GM10248 (cell line): ENCODE measurements at regions of chr9 and their contacts with region 1.

Region 1: DNA sequence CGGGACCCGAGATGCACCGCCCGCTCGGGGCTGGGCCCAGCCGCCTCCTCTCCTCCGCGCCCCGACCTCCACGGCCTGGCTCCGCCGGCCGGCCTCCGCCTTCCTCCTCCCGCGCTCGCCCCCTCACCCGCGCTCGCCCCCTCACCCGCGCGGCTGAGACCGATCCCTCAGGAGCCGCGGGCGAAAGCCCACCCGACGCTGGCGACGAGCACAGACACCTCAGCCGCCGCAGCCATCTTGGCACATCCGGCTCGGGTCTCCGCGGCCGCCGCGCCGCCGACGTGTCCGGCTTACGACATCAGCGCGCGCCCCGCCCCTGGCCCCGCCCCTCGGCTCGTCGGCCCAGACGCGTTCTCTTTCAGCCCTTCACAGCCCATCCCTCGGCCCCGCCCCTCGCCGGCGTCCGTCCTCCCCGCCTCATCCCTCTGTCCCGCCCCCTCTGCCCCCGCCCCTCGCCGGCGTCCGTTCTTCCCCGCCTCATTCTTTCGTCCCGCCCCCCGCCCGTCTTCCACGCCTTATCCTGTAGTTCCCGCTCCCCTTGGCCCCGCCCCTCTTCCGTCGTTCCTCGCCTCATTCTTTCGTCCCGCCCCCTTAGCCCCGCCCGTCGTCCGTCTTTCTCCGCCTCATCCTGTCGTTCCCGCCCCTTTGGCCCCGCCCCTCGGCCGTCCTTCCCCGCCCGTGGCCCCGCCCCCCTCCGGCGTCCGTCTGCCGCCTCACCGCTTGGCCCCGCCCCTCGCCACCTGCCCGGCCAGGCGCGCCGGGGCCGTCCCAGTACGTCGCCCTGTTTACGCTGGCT is at the start of gene SEC16A:
- DNase-seq: peak; percentile 99
- CTCF ChIP-seq: no peak

Region 2: DNA sequence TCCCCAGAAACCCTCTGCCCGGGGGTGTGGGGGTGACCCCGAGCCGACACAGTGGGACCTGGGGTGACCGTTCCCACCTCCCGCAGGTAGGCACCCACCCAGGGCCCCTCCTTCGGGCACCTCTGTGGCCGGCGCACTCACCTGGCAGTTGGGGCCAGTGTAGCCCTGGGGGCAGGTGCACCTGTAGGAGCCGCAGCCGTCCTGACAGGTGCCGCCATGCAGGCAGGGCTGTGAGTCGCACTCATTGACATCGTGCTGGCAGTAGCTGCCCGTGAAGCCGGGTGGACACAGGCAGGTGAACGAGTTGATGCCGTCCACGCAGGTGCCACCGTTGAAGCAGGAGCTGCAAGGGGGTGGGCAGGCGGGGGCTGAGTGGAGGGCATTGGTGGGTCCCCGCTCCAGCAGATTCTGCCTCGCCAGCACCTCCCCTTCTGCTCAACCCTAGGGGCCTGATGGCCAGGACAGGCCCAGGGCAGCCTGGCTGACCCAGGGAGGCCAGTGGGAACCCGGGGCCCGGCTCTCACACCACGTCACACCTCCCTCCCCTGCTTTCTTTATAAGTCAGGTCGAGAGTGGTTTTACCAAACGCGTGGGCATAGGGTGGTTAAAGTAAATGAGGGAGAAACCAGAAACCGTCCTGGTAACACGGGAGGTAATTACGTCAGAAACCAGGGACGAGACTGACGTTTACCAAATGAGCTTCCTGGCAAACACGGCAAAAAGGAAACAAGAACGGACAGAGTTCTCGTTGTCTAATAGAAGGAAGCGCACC is 25.9 kb after region 1 on chr9:
- CTCF ChIA-PET with region 1: interaction called, 13 read pairs
- POLR2A ChIA-PET with region 1: no interaction called
- DNase-seq: no peak
- CTCF ChIP-seq: no peak

Region 3: DNA sequence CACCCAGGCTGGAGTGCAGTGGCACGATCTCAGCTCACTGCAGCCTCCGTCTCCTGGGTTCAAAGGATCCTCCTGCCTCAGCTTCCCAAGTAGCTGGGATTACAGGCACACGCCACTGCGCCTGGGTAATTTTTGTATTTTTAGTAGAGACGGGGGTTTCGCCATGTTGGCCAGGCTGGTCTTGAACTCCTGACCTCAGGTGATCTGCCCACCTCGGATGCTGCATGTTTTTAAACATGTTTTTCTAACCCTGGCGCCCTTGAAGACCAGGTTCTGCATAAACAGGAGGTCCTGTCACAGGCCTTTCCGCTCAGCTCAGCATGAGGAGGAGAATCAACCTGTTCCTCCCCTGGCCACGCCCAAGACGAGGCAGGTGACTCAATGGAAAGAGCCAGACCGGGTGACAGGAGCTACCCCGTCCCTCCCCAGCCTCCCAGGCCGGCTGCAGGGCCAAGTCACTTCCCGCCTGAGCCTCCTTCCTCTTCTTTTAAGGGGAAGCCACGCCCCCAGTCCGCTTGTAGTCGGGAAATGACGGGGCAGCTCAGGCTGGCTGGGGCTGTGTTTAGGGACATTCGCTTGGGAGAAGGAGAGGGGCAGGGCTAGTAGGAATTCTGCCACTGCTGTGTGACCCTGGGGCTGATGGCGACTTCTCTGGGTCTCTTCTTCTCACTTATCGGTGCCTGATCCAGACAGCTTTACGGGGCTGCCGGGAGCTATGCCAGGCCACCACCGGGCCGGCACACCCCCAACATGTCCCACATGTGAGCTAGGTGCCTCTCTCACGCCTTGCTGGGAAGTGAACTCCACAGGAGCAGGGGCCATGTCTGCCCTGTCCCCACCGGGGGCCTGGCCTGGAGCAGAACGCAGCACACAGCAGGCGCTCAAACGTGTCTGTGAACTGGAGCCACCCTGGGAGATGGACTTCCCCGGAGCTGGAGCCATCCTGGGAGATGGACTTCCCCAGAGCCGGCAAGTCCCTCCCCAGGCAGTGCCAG is 56.7 kb after region 1 on chr9:
- CTCF ChIA-PET with region 1: interaction called, 23 read pairs
- POLR2A ChIA-PET with region 1: no interaction called
- DNase-seq: peak; percentile 88
- CTCF ChIP-seq: no peak

Region 4: DNA sequence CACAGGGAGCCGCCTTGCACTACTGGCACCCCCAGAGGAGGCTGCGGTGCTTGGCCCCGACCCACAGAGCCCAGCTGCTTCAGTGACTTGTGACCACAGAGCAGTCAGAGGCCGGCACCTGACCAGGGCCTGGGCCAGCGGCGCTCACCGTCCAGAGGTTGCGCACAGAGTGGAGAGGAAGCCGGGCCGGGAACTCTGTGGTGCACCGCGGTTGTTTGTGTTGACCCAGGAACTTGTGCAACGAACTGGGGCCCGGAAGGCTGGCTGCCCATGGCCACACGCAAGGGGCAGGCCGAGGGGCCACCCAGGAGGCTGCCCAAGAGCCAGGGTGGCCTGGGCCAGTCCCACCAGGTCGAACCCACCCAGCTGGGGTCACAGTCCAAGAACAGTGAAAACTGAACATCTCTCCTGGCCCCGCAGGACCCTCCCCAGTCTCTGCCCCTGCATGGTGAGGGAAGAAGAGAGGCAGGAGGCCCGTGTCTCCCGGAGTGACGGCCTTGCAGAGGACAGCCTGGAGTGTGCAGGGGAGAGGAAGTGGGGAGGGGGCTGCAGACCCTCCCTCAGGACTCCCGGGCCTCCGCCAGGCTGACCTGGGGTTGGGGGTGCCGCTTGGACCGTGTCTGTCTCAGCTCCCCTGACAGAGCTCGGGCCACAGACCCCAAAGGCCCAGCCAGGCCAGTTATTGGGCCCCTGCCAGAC is 136.9 kb after region 1 on chr9:
- CTCF ChIA-PET with region 1: interaction called, 247 read pairs
- POLR2A ChIA-PET with region 1: no interaction called
- DNase-seq: no peak
- CTCF ChIP-seq: no peak

Region 5: DNA sequence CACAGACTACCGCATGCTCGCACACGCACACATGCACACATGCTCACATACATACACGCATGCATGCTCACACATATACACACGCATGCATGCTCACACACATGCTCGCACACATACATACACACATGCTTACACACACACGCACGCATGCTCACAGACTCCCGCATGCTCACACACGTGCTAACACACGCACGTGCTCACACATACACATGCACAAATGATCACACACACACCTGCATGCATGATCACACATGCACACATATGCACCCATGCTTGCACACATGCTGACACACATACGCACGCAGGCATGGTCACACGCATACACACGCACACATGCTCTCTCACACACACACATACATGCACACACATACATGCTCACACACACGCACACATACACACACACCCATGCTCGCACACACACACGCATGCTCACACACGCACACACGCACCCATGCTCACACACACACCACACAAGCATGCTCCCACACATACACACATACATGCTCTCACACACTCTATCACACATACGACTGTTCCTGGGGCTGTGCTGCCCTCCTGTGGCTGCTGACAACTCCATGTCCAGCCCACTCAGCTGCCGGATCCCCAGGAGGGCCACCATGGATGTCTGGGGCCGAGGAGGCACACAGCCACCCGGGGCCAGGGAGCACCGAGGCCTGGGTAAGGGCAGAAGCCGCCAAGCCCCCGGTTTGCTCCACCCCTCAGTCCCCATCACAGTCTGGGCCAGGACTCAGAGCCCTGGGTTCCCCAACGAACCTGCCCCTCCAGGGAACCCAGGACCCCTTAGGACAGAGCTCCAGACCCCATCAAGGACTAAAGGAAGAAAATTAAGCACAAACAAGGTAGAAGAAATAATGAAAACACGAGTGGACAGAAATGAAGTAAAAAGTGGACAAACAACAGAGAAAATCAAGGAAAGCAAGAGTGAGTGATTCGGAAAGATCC is 148.3 kb after region 1 on chr9:
- CTCF ChIA-PET with region 1: interaction called, 247 read pairs
- POLR2A ChIA-PET with region 1: no interaction called
- DNase-seq: peak; percentile 79
- CTCF ChIP-seq: peak; percentile 85

Region 6: GRCh38 chr9:136644598-136645351 is 161.8 kb after region 1 on chr9:
- CTCF ChIA-PET with region 1: interaction called, 76 read pairs
- POLR2A ChIA-PET with region 1: no interaction called
- DNase-seq: peak; percentile 87
- CTCF ChIP-seq: peak; percentile 80